ENCODE measurements at regions of chr1 and their contacts with region 1.

Region 1: DNA sequence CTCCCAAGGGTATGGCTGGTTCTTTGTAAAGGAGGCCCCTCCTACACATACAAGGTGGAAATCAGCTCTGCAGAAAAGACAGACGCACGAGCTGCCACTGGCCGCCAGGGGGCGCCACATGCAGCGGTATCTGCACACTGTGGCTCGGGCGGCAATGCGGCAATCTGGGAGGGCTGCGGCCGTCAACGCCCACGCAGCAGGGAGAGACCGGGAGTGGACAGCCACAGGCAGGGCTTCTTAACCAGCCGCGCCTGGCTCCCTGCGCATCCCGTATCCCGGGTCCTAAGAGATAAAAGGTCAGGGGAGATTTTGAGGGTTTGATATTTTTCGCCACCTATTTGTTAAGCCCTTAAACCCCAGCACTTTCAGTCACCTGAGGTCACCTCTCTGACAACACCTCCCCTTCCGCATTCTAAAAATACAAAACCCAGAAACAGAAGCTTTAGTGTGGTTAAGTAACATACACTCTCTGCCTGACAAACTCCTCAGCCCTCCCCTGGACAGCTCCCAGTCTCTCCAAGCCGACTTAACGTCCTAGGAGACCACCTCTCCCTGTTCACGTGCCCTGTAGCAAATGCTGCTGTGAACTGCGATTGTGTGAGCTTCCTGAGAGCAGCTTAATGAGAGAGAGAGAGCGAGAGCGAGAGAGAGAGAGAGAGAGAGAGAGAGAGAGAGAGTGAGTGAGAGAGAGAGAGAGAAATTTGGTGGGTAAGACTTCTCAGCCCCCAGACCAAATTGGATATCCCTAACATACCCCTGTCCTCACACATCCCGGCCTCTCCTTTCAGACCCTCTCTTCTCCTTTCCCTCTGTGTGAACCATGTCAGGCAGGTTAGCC is 13.5 kb upstream of the KCNA2 start:
- DNase-seq: peak; percentile 86 to 90 (median 88)
- ATAC-seq: peak; percentile 95
- H3K4me3 ChIP-seq: no peak overlapping the region
- H3K4me1 ChIP-seq: peaks cover 6% of the 10 kb centered on the region
- CTCF ChIP-seq: peak; percentile 90

Region 2: DNA sequence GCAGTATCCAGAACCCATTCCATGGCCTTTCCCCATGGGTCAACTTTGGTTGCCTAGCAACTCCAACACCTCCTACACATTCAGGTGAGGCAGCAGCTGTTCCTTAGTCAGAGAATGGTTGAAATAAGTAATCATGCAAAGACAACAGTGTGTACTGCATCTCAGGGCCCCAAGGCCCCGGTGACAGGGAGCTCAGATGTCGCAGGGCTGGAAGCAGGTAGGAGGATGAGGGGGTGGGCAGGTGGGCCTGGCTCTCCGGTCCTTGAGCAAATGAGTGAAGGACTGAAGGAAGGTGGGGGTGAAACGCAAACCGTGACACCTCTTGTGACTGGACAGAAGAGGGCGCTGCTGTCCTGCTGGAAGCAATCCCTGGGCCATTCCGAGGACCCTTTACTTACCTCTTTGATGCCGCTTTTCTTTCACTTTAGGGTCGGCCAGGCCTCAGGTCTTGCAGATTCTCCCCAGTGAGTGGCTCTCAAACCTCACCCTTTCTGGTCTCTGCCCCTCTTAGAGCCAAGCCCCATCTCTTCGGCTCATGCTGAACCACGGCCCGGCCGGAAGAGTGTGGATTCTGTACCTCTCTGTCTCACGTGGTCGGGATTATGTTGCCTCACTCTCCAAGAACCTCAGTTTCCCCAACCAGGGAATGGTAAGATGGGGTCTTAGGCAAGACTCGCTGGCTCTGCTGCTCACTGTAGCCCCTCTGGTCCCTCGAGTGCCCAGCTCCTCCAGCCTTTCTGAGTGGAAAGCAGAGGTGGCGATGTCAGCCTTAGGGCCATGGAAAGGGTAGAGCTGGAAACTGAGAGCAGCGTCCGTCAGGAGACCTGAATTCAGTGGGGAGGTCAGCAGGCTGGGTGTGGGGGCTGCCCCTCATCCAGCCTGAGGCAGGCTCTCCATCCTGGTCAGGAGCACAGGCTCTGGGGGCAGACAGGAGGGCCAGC is 95.0 kb before region 1 on chr1:
- intact Hi-C with region 1: loop called in 1 of 2 experiments (anchors 10 kb)
- DNase-seq: peak in 1 of 3 donors; percentile 25
- ATAC-seq: peak; percentile 68
- H3K4me3 ChIP-seq: no peak overlapping the region
- H3K4me1 ChIP-seq: no peaks in the 10 kb centered on the region
- CTCF ChIP-seq: peak; percentile 25

Region 3: DNA sequence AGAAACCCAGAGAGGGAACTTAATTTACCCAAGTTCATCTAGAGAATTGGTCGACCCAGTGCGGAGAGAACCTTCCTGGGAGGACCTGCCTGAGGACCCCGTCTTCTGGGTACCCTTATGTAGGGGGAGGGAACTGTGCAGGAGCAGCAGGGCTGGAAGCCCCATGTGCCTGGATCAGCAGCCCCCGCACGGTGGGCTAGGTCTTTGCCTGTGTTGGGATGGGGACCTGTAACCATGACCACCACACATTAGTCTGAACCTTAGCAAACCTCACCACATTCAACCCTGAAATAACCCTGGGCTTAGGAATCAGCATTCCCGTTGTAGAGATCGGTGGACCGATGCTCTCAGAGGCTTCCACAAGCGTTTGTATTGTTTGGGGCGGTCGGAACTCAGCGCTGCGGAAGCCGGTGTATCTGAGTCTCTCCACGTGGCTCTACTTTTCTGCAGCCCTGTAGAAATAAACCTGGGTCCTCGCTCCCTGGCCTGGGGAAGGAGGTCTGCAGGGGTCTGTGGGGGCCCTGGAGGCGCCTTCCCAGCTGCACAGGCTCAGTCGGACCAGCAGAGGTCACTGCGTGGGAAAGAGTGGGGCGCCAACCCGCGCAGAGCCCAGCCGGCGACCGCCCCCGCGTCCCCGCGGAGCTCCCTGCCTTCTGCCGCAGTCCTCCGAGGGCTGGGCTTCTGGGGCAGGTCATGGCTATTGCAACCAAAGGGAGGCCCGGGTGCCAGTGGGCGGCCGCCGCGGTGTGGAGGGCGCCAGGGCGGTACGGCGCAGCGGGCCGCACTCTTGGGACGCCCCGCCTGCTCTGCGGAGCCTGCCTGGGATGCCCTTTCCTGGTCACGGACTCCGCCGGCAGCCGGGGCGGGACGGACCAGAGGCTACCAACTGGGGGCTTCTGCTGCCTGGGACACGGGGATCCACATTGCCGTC is 64.5 kb before region 1 on chr1:
- intact Hi-C with region 1: loop called in 1 of 2 experiments (anchors 10 kb)
- DNase-seq: peak in 2 of 3 donors; percentile 23 to 50
- ATAC-seq: peak; percentile 82
- H3K4me3 ChIP-seq: no peak overlapping the region
- H3K4me1 ChIP-seq: no peaks in the 10 kb centered on the region
- CTCF ChIP-seq: peak; percentile 36

Region 4: GRCh38 chr1:110766025-110766647 is 146.5 kb after region 1 on chr1:
- intact Hi-C with region 1: loop called in 1 of 2 experiments (anchors 1 kb)
- DNase-seq: peak in 1 of 3 donors; percentile 17
- ATAC-seq: peak; percentile 60
- H3K4me3 ChIP-seq: no peak overlapping the region
- H3K4me1 ChIP-seq: no peaks in the 10 kb centered on the region
- CTCF ChIP-seq: peak; percentile 14

Region 5: DNA sequence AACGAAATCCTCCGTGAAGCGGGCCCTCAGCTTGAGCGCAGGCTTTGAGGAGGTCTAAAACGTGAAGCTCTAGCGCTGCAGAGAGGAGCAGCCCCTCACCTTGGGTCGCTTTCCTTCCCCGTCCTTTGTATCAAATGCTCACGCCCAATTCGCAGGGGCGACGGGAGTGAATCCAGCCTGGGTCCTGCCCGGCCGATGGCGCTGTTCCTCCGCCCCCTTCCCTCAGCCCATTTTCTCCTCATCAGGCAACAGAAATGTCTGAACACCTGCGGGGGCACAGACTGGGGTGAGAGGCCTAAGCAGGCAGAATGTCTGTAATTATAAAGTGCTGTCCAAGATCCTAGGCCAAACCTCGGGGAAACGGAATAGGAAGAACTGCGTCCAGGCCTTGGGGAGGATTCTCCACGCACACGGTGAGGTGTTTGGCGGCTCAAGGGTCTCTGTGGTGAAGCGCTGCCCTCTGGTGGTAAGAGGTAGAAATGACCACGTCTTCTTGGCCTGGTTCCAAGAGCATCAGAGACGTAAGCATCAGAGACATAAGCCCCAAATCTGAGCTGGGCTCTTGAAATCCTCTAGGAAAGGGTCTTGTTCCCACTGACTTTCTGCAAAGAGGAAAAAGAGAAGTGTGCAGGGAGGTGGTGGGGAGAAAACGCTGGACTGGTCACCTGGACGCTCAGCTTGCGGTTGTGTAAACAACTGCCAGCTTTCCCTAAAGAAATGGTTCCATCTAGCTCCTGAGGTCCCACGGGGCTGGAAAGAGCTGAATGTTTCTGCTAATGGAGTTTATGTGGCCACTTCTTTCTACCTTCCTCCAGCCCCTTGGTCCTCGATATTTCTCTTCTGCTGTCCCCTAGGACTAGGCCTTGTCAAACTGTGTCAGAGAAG is 161.2 kb after region 1 on chr1:
- intact Hi-C with region 1: loop called in 1 of 2 experiments (anchors 5 kb)
- DNase-seq: peak; percentile 48 to 81 (median 49)
- ATAC-seq: peak; percentile 82
- H3K4me3 ChIP-seq: no peak overlapping the region
- H3K4me1 ChIP-seq: no peaks in the 10 kb centered on the region
- CTCF ChIP-seq: peak; percentile 42

Region 6: GRCh38 chr1:110857964-110858948 is 238.6 kb after region 1 on chr1:
- intact Hi-C with region 1: no loop called
- DNase-seq: no peak
- ATAC-seq: no peak
- H3K4me3 ChIP-seq: no peak overlapping the region
- H3K4me1 ChIP-seq: no peaks in the 10 kb centered on the region
- CTCF ChIP-seq: no peak